Activated CD4-positive, alpha-beta T cell treated with anti-CD3 and anti-CD28 coated beads for 36 hours (primary cell): ENCODE measurements at regions of chr10 and their contacts with region 1.

Region 1: DNA sequence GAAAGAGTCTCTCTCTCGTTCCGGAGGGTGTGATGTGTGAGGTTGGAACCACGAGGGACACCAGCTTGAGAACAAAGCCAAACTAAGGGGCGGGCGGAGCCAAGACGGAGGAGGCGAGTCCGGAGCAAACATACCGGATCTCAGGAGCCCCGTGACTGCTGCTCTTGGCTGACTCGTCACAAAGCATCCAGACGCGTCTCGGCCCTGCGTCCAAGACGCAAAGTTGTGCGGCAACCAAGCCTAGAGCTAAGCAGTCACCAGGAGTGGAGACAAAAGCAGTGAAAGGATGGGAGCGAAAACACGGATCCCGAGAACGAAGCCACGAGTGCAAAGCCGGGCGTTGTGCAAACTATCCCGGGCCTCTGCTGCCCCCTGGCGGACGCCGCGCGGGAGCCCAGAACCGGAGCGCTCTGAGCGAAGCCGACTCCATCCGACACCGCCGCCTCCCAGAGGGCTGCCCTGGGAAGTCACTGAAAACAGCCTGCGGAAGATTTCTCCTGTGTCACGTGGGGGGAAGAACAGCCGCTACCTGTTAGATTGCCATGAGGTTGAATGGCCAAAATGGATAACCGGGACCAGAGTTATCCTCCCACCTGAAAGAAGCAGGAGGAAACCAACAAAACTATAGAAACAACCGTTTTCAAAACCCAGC is 46.4 kb upstream of the TMEM72 start:
- DNase-seq: peak; percentile 92
- ATAC-seq: peak; percentile 92
- H3K4me3 Mint-ChIP-seq: peak overlapping the region; percentile 79
- H3K27ac Mint-ChIP-seq: peak overlapping the region; percentile 52
- H3K4me1 Mint-ChIP-seq: peaks cover 17% of the 10 kb centered on the region
- H3K27me3 Mint-ChIP-seq: peaks cover 54% of the 10 kb centered on the region

Region 2: DNA sequence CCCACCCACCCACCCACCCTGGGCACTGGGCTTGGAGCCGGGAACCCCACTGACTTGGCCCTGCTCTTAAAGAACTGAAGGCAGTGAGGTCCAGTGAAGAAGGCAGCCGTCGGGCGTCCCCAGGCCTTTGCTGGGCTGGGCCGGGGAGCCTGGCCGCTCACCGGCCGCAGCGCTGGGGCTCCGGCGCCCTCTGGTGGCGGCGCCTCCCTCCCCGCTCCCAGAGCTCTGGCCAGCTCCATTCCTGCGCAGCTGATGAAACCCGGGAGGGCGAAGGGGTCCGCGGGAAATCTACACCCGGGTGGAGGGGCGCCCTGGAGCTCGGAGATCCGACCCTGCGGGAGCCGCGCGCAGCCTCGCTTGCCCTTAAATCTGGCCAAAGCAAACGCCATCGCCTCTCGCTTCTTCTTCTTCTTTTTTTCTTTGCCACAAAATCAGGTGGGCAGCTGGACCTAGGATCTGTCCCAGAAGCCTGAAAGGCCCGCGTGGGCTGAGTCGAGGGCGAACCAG is 478.2 kb before region 1 on chr10:
- CTCF ChIA-PET with region 1: interaction called, 3 read pairs
- POLR2A ChIA-PET with region 1: no interaction called
- intact Hi-C with region 1: loop called in 1 of 2 experiments (anchors 5 kb)
- DNase-seq: peak; percentile 61
- ATAC-seq: peak; percentile 74
- H3K4me3 Mint-ChIP-seq: no peak overlapping the region
- H3K27ac Mint-ChIP-seq: no peak overlapping the region
- H3K4me1 Mint-ChIP-seq: peaks cover 3% of the 10 kb centered on the region
- H3K27me3 Mint-ChIP-seq: peaks cover 31% of the 10 kb centered on the region

Region 3: DNA sequence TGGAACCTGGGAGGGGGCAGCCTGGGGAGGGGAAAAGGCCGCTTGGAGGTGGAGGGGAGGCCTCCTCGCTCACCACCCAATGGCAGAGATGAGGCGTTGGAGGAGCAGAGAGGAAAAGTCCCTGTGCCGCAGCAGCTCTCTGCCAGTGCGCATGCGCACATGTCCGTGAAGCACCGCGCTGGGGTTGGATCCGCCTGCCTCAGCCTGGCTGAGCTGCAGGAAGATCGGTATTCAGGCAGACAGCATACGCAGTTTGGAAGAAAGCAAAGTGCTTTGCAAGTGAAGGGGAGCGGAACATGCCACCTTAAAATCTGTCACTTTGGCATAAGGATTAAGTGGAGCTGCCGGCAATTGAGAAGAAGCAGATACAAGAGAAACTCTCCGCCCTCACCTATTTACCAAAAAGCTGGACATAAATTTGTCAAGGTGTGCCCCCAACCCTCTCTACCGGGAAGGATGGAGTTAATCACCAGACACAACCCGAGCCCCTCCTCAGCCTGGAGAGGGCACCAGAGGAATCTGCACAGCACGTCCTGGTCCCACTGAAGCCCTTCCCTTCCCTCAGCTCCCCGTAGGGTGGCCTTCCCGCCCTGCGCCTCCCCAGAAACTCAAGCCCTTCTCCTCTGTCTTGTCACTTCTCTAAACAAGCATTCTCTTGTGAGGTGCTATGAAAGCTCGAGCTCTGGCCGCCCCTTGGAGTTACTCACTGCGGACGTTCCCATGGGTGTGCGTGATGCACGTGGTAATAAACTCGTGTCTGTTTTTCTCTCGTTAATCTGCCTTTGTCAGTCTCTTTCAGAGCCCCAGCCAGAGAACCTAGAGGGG is 14.2 kb after region 1 on chr10:
- CTCF ChIA-PET with region 1: interaction called, 9 read pairs
- POLR2A ChIA-PET with region 1: no interaction called
- intact Hi-C with region 1: loop called in 1 of 2 experiments (anchors 2 kb)
- DNase-seq: peak; percentile 87
- ATAC-seq: peak; percentile 95
- H3K4me3 Mint-ChIP-seq: peak overlapping the region; percentile 67
- H3K27ac Mint-ChIP-seq: peak overlapping the region; percentile 55
- H3K4me1 Mint-ChIP-seq: peaks cover 6% of the 10 kb centered on the region
- H3K27me3 Mint-ChIP-seq: peaks cover 7% of the 10 kb centered on the region

Region 4: DNA sequence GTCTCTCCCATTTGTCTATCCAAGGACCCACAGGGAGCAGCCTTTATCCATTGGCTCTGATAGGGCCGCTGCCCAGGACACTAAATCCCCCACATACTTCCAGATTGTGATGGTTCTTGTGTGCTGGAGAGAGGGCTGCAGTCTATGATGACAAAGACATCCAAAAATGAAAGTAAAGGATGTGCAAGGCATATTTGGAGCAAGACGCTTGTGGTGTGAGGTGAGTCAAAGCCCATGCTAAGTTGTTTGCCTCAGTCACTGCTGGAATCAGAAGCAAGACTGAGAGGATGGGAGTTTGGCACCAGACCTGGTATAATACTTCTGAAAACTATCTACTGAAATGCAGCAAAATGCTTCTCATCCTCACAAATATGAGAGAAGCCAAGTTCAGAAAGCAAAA is 158.7 kb after region 1 on chr10:
- CTCF ChIA-PET with region 1: no interaction called
- POLR2A ChIA-PET with region 1: no interaction called
- intact Hi-C with region 1: no loop called
- DNase-seq: no peak
- ATAC-seq: no peak
- H3K4me3 Mint-ChIP-seq: no peak overlapping the region
- H3K27ac Mint-ChIP-seq: no peak overlapping the region
- H3K4me1 Mint-ChIP-seq: no peaks in the 10 kb centered on the region
- H3K27me3 Mint-ChIP-seq: peaks cover 4% of the 10 kb centered on the region

Region 5: DNA sequence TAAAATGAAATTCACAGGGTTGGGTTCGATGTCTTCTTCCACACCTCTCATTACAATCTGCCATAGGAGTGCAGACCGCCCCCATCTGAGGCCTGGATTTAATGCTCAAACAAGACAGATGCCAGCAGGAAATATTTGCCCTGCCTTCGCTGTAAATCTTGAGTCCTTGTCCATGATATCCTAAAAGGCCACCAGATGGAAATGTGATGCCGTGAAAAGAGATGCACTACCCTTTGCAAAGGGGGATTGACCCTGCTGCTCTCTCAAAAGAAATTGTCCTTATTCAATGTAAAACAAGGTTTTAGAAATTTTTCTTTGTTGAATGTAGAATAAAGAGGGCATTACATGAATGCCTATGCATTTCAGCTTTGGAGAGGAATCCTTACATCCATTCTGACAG is 945.1 kb after region 1 on chr10:
- CTCF ChIA-PET with region 1: no interaction called
- POLR2A ChIA-PET with region 1: no interaction called
- intact Hi-C with region 1: no loop called
- DNase-seq: no peak
- ATAC-seq: no peak
- H3K4me3 Mint-ChIP-seq: no peak overlapping the region
- H3K27ac Mint-ChIP-seq: no peak overlapping the region
- H3K4me1 Mint-ChIP-seq: no peaks in the 10 kb centered on the region
- H3K27me3 Mint-ChIP-seq: no peaks in the 10 kb centered on the region